Left cardiac atrium (tissue), 4 donors: ENCODE measurements at regions of chr7 and their contacts with region 1.

Region 1: DNA sequence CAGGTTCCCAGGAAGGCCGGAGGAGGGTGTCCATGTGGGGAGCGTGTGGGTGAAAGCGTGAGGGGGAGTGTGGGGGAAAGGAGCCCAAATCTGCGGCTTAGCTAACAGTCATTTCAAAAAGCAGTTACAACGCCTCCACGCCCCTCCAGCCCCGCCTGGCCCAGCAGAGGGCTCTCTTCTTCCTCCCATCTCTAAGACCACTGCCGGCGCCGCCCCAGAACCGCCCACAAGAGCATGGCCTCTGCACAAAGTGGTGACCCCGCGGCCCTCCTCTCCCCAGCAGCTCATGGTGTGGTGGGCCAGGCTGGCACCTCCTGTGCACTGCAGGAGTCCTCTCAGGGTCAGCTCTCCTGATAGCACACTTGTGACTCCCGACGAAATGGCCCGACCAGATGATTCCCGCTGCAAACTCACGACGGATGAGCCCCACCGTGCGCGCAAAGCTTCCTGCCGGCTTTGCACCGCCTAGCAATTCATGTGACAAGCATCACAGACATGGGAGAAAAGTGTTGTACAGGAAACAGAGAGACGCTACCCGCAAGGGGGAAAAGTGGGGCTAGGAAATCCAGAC is 12.4 kb upstream of the HUS1 start:
- DNase-seq: peak; percentile 91
- ATAC-seq: peak; percentile 99 to 100

Region 2: DNA sequence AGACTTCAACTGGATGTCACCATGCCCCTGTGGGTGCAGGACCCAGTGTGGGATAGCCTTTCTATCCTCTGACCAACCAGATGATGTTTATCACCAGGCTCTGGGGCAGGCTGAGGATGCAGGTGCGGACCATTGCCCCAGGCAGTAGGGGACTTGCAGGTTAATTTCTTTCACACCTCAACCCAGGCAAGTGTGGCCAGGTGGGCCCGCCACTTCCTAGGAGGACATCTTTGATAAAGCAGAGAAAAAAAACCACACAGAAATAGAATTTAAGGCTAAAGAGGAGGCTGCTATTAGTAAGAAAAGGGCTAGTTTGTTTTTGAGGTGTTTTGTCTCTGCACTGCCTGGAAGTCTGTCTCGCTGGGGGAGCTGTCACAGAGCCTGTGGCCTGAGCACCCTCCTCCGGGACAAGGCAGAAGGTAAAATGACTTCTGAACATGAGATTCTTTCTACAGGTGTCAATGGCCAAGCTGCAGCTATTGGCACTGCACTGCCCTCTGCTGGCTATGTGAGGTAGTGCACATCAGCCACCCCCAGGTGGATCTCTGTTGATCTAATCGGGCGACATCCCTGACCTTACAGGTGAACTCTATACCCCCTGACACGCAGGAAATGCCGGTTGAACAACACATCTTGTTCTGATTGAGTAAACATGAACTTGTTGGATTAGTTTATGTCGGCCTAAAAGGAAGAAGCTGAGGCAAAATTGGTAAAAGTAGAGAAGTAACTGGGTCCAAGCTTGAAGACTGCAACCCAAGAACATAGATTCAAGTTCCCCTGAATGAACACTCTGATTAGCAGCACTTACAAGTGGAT is 118.2 kb after region 1 on chr7:
- intact Hi-C with region 1: loop called (anchors 1 to 5 kb)
- DNase-seq: peak; percentile 72
- ATAC-seq: peak; percentile 77 to 83

Region 3: GRCh38 chr7:48130658-48131108 is 138.9 kb after region 1 on chr7:
- intact Hi-C with region 1: no loop called
- DNase-seq: no peak
- ATAC-seq: no peak

Region 4: GRCh38 chr7:49037348-49038210 is 1045.8 kb after region 1 on chr7:
- intact Hi-C with region 1: no loop called
- DNase-seq: no peak
- ATAC-seq: no peak